Heart left ventricle (tissue), 16 donors: ENCODE measurements at regions of chr3 and their contacts with region 1.

Region 1: DNA sequence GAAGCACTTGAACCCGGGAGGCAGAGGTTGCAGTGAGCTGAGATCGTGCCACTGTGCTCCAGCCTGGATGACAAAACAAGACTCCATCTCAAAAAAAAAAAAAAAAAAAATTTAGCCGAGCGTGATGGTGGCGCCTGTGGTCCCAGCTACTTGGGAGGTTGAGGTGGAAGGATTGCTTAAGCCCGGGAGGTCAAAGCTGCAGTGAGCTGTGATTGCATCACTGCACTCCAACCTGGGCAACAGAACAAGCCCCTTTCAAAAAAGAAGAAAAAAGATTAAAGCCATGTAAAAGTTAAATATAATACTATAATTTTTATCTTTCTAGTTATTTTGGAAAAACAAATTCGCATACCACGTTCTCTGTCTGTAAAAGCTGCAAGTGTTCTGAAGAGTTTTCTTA is 61.9 kb upstream of the SKIL start:
- DNase-seq: no peak
- ATAC-seq: no peak
- H3K4me3 ChIP-seq: no peak overlapping the region
- H3K27ac ChIP-seq: no peak overlapping the region
- H3K4me1 ChIP-seq: no peaks in the 10 kb centered on the region
- H3K27me3 ChIP-seq: no peaks in the 10 kb centered on the region
- CTCF ChIP-seq: no peak
- POLR2A ChIP-seq: no peak

Region 2: DNA sequence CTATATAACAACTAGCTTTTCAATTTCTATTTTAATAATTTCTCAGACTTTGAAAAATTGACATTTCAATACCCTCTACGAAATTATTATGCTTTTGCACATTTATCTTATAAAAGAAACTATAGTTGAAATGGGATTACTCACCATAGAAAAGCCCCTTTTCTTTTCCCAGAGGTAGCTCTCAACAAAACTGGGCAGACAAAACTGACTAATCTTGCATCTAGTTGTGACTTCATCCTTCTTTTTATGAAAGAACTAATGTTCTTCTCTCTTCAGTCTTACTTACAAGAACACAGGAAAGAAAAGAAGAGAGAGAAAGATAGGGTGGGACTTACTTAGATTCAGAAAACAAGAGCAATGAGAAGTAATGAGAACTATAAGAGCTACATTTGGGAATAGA is 196.8 kb before region 1 on chr3:
- intact Hi-C with region 1: no loop called
- DNase-seq: no peak
- ATAC-seq: no peak
- H3K4me3 ChIP-seq: no peak overlapping the region
- H3K27ac ChIP-seq: no peak overlapping the region
- H3K4me1 ChIP-seq: no peaks in the 10 kb centered on the region
- H3K27me3 ChIP-seq: no peaks in the 10 kb centered on the region
- CTCF ChIP-seq: no peak
- POLR2A ChIP-seq: no peak

Region 3: DNA sequence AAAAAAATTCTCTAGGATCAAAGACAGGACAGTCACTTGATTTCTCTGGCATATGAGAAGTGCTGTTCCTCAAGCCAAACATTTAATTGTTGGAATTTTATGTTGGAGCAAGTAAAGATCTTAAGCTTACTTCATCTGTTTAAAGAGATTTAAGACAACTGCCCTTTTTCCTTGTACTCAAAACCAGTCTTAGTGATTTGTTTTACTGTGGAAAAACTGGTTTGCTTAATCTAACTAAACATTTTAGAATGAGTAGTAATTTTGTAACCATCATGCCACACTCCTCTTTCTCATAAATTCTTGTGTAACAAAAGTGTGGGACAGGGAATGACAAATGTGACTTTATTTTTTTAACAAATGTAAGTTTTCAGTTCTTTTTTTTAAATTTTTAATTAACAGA is 54.9 kb before region 1 on chr3:
- intact Hi-C with region 1: loop called in 1 of 10 experiments (anchors 2 kb)
- DNase-seq: no peak
- ATAC-seq: no peak
- H3K4me3 ChIP-seq: no peak overlapping the region
- H3K27ac ChIP-seq: no peak overlapping the region
- H3K4me1 ChIP-seq: no peaks in the 10 kb centered on the region
- H3K27me3 ChIP-seq: no peaks in the 10 kb centered on the region
- CTCF ChIP-seq: no peak
- POLR2A ChIP-seq: no peak